Left lung (tissue), 14 donors: ENCODE measurements at regions of chr2 and their contacts with region 1.

Region 1: DNA sequence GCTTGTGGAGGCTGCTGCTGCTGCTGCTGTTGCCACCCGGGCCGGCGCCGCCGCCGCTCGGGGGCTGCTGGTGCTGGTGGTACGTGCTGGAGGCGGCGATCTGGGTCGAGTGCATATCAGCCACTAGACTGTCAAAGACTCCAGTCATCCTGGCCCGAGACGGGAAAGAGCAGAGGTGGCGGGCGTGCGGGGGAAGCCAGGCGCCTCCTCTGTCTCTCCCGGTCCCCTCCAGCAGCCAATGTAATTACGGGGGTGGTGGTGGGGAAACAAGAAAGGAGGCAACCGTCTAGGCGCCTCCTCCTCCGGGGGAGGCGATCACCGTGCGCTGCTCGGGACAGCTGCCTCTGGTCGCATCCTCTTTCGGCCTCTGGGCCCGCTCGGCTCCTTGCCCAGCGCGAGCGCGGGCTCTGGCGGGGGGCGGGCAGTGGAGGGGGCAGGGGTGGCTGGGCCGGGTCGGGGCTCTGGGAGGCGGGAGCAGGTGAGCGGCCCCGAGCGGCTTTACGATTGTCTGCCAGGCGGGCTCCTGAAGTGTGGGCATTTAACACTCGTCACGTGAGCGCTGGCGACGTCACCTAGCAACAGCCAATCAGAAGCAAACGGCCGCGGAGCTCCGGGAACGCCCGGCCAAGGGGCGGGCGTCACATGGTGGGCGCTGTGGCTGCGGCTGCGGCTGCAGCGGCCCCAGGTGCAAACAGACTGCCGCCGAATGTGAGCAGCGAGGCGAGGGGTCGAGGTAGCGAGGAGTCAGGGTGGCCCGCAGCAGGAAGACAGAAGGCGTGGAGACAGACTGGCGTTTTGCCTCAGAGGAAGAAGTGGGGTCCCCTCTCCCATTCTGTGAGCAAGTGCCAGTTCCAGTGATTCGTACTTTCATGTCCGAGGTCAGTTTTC is at the start of gene DLX2:
- DNase-seq: peak in 3 of 4 donors; percentile 85 to 92 (median 90)
- ATAC-seq: peak; percentile 70
- H3K4me3 ChIP-seq: peak within 1 kb of the TSS; percentile 21 to 58
- H3K27ac ChIP-seq: no peak within 1 kb of the TSS
- H3K4me1 ChIP-seq: peaks cover 33 to 68% of the 10 kb centered on the region in 2 donors
- H3K27me3 ChIP-seq: peaks cover 100% of the 10 kb centered on the region in 2 donors
- CTCF ChIP-seq: no peak
- polyA plus RNA-seq, gene DLX2: not detected

Region 2: DNA sequence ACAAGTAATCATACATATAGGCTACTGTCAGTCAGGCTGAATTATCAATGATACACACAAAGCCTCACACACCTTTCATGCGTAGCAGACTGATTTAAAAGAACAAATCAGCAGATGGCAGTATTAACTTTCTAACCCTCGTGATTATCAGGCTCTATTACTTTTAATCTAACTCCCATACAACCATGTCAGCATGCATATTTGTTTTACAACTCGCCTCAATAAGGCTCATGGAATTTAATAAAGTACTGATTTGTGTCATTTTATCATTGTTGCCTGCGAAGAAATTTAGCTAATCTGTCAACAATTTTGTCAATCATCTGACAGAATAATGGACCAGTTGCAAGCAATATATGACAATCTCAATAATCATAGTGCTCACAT is 291.4 kb before region 1 on chr2:
- intact Hi-C with region 1: loop called in 1 of 2 experiments (anchors 10 kb)
- DNase-seq: peak in 1 of 4 donors; percentile 32
- ATAC-seq: peak; percentile 63
- H3K4me3 ChIP-seq: no peak overlapping the region
- H3K27ac ChIP-seq: no peak overlapping the region
- H3K4me1 ChIP-seq: no peaks in the 10 kb centered on the region
- H3K27me3 ChIP-seq: no peaks in the 10 kb centered on the region
- CTCF ChIP-seq: no peak